Left cardiac atrium (tissue), 4 donors: ENCODE measurements at regions of chr6 and their contacts with region 1.

Region 1: DNA sequence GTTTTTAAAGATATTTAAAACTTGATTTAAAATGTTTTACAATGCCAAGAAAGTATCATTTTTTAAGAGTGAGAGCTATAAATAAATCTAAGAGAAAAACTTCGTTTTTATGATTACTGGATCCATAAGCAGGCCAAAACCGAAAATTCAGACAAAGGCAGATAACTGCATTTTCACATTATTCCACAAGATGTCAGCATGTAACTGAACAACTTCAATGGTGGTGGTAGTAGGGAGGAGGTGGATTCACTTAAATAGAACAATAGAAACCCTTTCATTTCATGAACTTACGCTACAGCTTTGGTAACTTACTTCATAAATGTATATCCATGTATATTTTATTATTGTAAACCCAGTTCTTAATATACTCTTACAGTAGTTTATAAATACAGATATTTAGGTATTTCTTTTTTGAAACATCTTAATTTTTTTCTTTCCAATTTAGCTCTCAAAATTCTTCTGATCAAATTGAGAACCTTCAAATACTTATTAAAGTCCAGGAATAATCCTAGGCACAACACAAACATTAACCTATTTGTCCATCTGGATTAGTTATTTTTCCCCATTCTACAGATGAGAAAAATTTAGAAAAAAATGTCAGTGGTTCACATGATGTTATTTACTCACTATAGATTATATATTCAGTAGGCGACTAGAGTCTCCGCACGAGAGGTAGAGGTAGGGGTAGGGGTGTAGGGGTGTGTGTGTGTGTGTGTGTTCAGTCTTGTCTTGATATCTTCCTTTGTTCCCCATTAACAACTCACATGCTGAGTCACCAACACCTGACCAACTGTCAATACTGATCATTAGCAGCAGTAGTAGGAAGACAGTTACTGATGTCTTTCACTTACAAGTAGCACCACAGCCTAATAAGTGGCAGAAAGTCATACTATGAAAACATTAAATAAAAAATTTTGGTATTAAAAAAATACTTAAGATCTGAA is 111.5 kb downstream of the ARHGAP18 start:
- DNase-seq: no peak
- ATAC-seq: peak; percentile 71 to 79

Region 2: GRCh38 chr6:129730477-129731165 is 132.1 kb after region 1 on chr6:
- intact Hi-C with region 1: loop called (anchors 2 to 5 kb)
- DNase-seq: no peak
- ATAC-seq: peak in 1 of 2 donors; percentile 30

Region 3: DNA sequence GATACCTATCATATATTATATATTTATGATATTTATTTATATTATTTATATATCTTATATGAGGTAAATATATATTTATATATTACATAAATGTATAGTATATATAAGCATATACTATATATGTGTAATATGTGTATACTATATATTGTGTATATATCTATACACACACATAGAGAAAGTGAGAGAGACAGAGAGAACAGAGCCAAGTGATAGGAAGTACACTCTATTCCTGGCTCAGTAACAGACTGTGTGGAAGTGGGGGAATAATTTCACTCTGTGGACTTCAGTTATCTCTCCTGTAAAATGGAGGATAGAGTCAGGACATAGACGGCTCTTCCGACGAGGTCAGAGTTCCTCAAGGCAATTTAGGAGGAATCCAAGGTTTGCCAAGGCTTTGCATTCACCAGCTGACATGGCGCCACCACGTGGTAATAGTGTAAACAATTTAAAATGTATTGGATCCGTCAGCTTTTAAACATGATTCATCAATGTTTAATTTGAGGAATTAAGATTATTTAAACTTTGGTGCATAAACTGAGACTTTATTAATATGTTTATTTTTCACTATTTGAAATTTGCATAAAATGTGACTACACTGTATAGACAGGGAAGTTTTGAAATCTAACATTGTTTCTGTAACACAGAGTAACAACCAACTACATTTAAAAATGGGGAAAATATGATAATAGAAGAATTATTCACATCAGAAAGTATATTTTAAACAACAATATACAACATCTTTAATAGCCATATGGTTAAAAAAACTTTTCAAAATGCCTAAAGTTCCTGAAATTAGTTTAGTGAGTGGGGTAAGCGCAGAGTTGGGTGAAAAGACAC is 338.0 kb after region 1 on chr6:
- intact Hi-C with region 1: loop called in 1 of 2 experiments (anchors 5 kb)
- DNase-seq: peak; percentile 36
- ATAC-seq: peak in 1 of 2 donors; percentile 56

Region 4: DNA sequence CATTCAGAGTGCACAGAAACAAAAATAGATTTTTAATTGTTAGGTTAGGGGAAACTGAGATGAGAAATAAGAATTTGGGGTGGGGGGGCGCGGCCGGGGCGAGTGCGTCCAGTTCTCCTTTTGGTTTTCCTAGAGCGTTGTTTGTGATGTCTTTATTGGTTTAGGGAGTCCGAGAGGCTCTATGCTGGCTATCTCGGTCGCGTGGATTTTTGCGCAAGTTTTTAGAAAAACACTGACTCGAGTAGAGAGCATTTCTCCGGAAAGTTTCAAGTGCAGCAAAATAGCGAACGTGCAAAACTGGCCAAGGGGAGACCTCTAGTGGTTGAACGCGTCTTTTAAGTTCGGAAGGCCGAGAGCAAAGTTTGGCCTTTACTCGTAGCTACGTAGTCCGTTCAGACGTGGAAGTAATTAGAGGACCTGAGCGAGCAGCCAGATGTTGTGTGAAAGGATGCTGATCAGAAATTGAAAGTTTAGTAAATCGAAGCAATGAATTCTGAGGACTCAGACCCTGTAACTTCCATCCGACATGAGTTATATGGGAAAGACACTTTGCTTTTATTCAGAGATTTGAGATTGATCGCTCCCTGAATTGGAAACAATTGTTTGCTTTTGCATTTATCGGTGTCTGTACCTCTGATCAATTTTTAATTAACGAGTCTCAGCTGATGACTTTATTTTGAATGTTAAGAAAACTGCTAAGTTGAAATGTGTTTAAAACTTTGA is 422.6 kb after region 1 on chr6:
- intact Hi-C with region 1: loop called in 1 of 2 experiments (anchors 5 kb)
- DNase-seq: peak; percentile 82
- ATAC-seq: peak; percentile 81 to 86